ENCODE measurements at regions of chr1 and their contacts with region 1.

Region 1: GRCh38 chr1:171644805-171645483 is 7.5 kb downstream of the MYOC start:
- DNase-seq: peak; percentile 91
- ATAC-seq: peak; percentile 97
- H3K4me3 ChIP-seq: no peak overlapping the region
- H3K27ac ChIP-seq: no peak overlapping the region
- H3K4me1 ChIP-seq: peaks cover 0 to 9% of the 10 kb centered on the region in 2 experiments; a peak in 2 of 4 replicates
- H3K27me3 ChIP-seq: no peaks in the 10 kb centered on the region
- CTCF ChIP-seq: peak; percentile 77 to 85 (median 81)
- POLR2A ChIP-seq: no peak
- RAD21 ChIP-seq: peak; percentile 90

Region 2: DNA sequence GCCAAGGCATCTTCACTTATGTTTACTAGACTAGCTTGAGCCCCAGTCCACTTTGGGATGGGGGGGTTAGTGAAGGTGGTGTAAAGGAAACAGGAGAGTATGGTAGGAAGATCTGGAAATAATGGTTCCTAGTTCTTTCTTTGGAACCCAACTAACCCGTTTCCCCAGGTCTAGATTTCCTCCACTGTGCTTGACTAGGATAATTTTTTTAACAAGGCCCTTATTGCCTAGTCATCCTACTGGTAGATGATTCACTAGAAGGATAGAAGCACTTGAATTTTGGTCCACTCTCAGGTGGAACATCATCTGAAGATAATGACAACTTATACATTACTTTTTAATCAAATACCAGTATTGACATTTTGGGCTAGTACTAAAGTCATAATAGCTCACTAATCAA is 68.8 kb before region 1 on chr1:
- CTCF ChIA-PET with region 1: no interaction called
- POLR2A ChIA-PET with region 1: no interaction called
- RAD21 ChIA-PET with region 1: no interaction called
- intact Hi-C with region 1: no loop called
- DNase-seq: no peak
- ATAC-seq: no peak
- H3K4me3 ChIP-seq: no peak overlapping the region
- H3K27ac ChIP-seq: no peak overlapping the region
- H3K4me1 ChIP-seq: no peaks in the 10 kb centered on the region
- H3K27me3 ChIP-seq: no peaks in the 10 kb centered on the region
- CTCF ChIP-seq: no peak
- POLR2A ChIP-seq: no peak
- RAD21 ChIP-seq: no peak

Region 3: DNA sequence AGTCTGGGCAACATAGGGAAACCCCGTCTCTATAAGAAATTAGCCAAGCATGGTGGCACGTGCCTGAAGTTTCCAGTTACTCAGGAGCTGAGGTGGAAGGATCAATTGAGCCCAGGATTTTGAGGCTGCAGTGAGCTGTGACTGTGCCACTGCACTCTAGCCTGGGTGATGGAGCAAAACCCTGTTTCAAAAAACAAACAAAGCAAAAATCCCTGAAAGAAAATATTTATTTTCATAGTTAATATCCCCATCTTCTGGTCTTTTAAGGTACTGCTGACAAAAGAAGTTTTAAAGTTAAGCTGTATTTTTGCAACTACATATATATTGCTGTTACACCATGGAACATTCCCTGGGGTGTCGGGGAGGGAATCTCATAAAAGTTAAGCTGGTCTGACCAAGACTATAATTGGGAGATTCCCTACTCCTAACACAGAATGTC is 70.9 kb after region 1 on chr1:
- CTCF ChIA-PET with region 1: interaction called, 26 read pairs
- POLR2A ChIA-PET with region 1: no interaction called
- RAD21 ChIA-PET with region 1: interaction called, 7 to 10 read pairs
- intact Hi-C with region 1: loop called (anchors 1 kb)
- DNase-seq: no peak
- ATAC-seq: peak; percentile 49
- H3K4me3 ChIP-seq: no peak overlapping the region
- H3K27ac ChIP-seq: no peak overlapping the region
- H3K4me1 ChIP-seq: no peaks in the 10 kb centered on the region
- H3K27me3 ChIP-seq: no peaks in the 10 kb centered on the region
- CTCF ChIP-seq: peak; percentile 23 to 53 (median 50); a peak in 4 of 6 replicates
- POLR2A ChIP-seq: no peak
- RAD21 ChIP-seq: peak; percentile 60

Region 4: GRCh38 chr1:171781176-171781875 is 136.4 kb after region 1 on chr1 and contains the start of gene METTL13:
- CTCF ChIA-PET with region 1: interaction called, 4 read pairs
- POLR2A ChIA-PET with region 1: interaction called, 4 read pairs
- RAD21 ChIA-PET with region 1: interaction called in 1 of 2 experiments, 3 read pairs
- intact Hi-C with region 1: loop called (anchors 5 kb)
- DNase-seq: peak; percentile 98
- ATAC-seq: peak; percentile 98
- H3K4me3 ChIP-seq: peak within 1 kb of the TSS; percentile 98
- H3K27ac ChIP-seq: peak within 1 kb of the TSS; percentile 73
- H3K4me1 ChIP-seq: peaks cover 5 to 18% of the 10 kb centered on the region in 2 experiments; a peak in 2 of 4 replicates
- H3K27me3 ChIP-seq: no peaks in the 10 kb centered on the region
- CTCF ChIP-seq: no peak
- POLR2A ChIP-seq: peak; percentile 70
- RAD21 ChIP-seq: no peak
- total RNA-seq, gene METTL13: 33.9 TPM

Region 5: DNA sequence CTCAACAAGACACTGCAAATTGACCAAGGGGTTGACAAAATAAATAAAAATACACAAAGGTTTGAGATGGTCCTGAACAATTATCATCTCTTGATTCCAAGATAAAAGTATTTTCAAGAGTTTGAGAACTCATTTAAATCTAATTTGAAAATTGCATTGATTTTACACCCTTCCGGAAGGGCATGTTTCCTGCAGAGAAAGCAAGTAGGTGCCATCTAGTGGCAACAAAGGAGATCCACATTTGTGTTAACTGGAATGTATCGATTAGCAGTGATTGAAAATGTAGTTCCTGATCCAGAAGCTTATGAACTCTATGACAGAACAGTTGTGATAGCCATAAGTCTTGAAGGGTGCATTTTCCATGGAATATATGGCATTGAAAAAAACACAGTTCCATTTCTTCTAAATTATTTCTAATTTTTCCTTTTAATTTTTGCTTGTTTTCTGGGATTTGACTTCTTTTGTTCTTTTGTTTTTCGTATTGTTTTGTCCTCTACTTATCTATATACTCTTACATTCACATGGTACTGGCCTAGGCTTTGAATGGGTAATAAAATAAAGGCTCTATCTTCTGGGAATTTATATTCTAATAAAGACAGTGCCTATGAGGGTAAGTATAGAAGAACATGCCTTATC is 340.0 kb after region 1 on chr1:
- CTCF ChIA-PET with region 1: interaction called, 10 read pairs
- POLR2A ChIA-PET with region 1: no interaction called
- RAD21 ChIA-PET with region 1: interaction called in 1 of 2 experiments, 3 read pairs
- intact Hi-C with region 1: loop called (anchors 1 kb)
- DNase-seq: peak; percentile 29
- ATAC-seq: peak; percentile 71
- H3K4me3 ChIP-seq: no peak overlapping the region
- H3K27ac ChIP-seq: no peak overlapping the region
- H3K4me1 ChIP-seq: no peaks in the 10 kb centered on the region
- H3K27me3 ChIP-seq: no peaks in the 10 kb centered on the region
- CTCF ChIP-seq: peak; percentile 81 to 84 (median 81)
- POLR2A ChIP-seq: no peak
- RAD21 ChIP-seq: peak; percentile 88

Measured in HCT116 (cell line).